HepG2 (cell line): ENCODE measurements at regions of chr4 and their contacts with region 1.

Region 1: GRCh38 chr4:2168469-2169319 is 73.2 kb downstream of the HAUS3 start:
- DNase-seq: no peak
- ATAC-seq: peak; percentile 42
- H3K4me3 ChIP-seq: no peak overlapping the region
- H3K27ac ChIP-seq: no peak overlapping the region
- H3K4me1 ChIP-seq: peaks cover 47% of the 10 kb centered on the region
- H3K27me3 ChIP-seq: no peaks in the 10 kb centered on the region
- CTCF ChIP-seq: no peak; the same call in 1 of the 2 replicates
- EP300 ChIP-seq: no peak
- POLR2A ChIP-seq: no peak
- RAD21 ChIP-seq: no peak

Region 2: GRCh38 chr4:1967512-1968149 is 201.1 kb before region 1 on chr4:
- CTCF ChIA-PET with region 1: no interaction called
- POLR2A ChIA-PET with region 1: no interaction called
- in situ Hi-C with region 1: no loop called
- intact Hi-C with region 1: no loop called
- DNase-seq: no peak
- ATAC-seq: no peak
- H3K4me3 ChIP-seq: no peak overlapping the region
- H3K27ac ChIP-seq: no peak overlapping the region
- H3K4me1 ChIP-seq: peaks cover 12% of the 10 kb centered on the region; the same call in 1 of the 2 replicates
- H3K27me3 ChIP-seq: no peaks in the 10 kb centered on the region
- CTCF ChIP-seq: no peak
- EP300 ChIP-seq: no peak
- POLR2A ChIP-seq: no peak
- RAD21 ChIP-seq: no peak

Region 3: DNA sequence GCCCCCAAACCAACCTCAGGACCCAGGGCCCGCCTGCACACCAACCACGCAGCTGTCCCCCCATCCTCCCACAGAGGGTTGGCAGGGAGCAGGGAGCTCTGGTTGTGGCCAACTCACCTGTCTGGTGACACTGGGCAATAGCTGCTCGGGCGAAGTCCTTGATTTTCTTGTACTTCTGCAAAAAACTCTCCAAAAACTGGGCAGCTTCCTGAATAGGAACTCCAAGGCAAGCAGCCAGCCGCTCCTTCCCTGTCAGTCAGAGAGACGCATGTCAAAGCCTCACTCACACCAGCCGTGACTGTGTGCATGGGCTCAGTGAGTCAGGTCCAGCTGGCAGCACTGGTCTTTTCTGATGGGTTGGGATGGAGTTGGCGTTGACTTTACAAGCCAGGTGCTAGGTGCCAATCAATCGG is 83.2 kb before region 1 on chr4:
- CTCF ChIA-PET with region 1: no interaction called
- POLR2A ChIA-PET with region 1: no interaction called
- in situ Hi-C with region 1: no loop called
- intact Hi-C with region 1: loop called (anchors 5 kb)
- DNase-seq: no peak
- ATAC-seq: no peak
- H3K4me3 ChIP-seq: no peak overlapping the region
- H3K27ac ChIP-seq: no peak overlapping the region
- H3K4me1 ChIP-seq: peaks cover 43% of the 10 kb centered on the region
- H3K27me3 ChIP-seq: peaks cover 5 to 32% of the 10 kb centered on the region in 2 experiments
- CTCF ChIP-seq: no peak
- EP300 ChIP-seq: no peak
- POLR2A ChIP-seq: no peak
- RAD21 ChIP-seq: no peak

Region 4: GRCh38 chr4:3201718-3202702 is 1033.3 kb after region 1 on chr4:
- CTCF ChIA-PET with region 1: no interaction called
- POLR2A ChIA-PET with region 1: no interaction called
- in situ Hi-C with region 1: no loop called
- intact Hi-C with region 1: no loop called
- DNase-seq: peak; percentile 53
- ATAC-seq: peak; percentile 27
- H3K4me3 ChIP-seq: no peak overlapping the region
- H3K27ac ChIP-seq: peak overlapping the region; percentile 95
- H3K4me1 ChIP-seq: peaks cover 57% of the 10 kb centered on the region
- H3K27me3 ChIP-seq: no peaks in the 10 kb centered on the region
- CTCF ChIP-seq: no peak
- EP300 ChIP-seq: no peak
- POLR2A ChIP-seq: no peak
- RAD21 ChIP-seq: no peak